Heart left ventricle (tissue), 16 donors: ENCODE measurements at regions of chr18 and their contacts with region 1.

Region 1: GRCh38 chr18:22267697-22268096 is 98.3 kb downstream of the GATA6 start:
- DNase-seq: peak; percentile 78 to 95 (median 86)
- ATAC-seq: peak; percentile 92 to 96 (median 92)
- H3K4me3 ChIP-seq: peak overlapping the region in 9 of 12 donors; percentile 34 to 61 (median 50)
- H3K27ac ChIP-seq: peak overlapping the region; percentile 77 to 99 (median 92)
- H3K4me1 ChIP-seq: peaks cover 0 to 33% (median 7%) of the 10 kb centered on the region in 12 donors
- H3K27me3 ChIP-seq: no peaks in the 10 kb centered on the region
- CTCF ChIP-seq: no peak
- POLR2A ChIP-seq: peak in 1 of 2 donors; percentile 31

Region 2: GRCh38 chr18:22185273-22185672 is 82.4 kb before region 1 on chr18:
- intact Hi-C with region 1: loop called in 5 of 10 experiments (anchors 5 kb)
- DNase-seq: peak in 2 of 5 donors; percentile 44 to 70
- ATAC-seq: peak; percentile 35 to 71 (median 50)
- H3K4me3 ChIP-seq: peak overlapping the region in 2 of 12 donors; percentile 1 to 12
- H3K27ac ChIP-seq: peak overlapping the region; percentile 65 to 100 (median 83)
- H3K4me1 ChIP-seq: peaks cover 0 to 100% (median 69%) of the 10 kb centered on the region in 12 donors
- H3K27me3 ChIP-seq: no peaks in the 10 kb centered on the region
- CTCF ChIP-seq: peak in 8 of 12 donors; percentile 13 to 52 (median 34)
- POLR2A ChIP-seq: no peak

Region 3: GRCh38 chr18:22214731-22215528 is 52.8 kb before region 1 on chr18:
- intact Hi-C with region 1: loop called in 3 of 10 experiments (anchors 5 to 10 kb)
- DNase-seq: no peak
- ATAC-seq: peak in 3 of 4 donors; percentile 25 to 36 (median 29)
- H3K4me3 ChIP-seq: no peak overlapping the region
- H3K27ac ChIP-seq: peak overlapping the region in 4 of 12 donors; percentile 23 to 42 (median 30)
- H3K4me1 ChIP-seq: peaks cover 0 to 56% (median 27%) of the 10 kb centered on the region in 12 donors
- H3K27me3 ChIP-seq: no peaks in the 10 kb centered on the region
- CTCF ChIP-seq: no peak
- POLR2A ChIP-seq: no peak

Region 4: GRCh38 chr18:22363867-22364463 is 96.3 kb after region 1 on chr18:
- intact Hi-C with region 1: loop called in 2 of 10 experiments (anchors 5 kb)
- DNase-seq: no peak
- ATAC-seq: peak; percentile 47 to 80 (median 73)
- H3K4me3 ChIP-seq: no peak overlapping the region
- H3K27ac ChIP-seq: no peak overlapping the region
- H3K4me1 ChIP-seq: peaks cover 0 to 9% (median 0%) of the 10 kb centered on the region in 12 donors
- H3K27me3 ChIP-seq: no peaks in the 10 kb centered on the region
- CTCF ChIP-seq: peak in 11 of 12 donors; percentile 12 to 59 (median 47)
- POLR2A ChIP-seq: no peak

Region 5: DNA sequence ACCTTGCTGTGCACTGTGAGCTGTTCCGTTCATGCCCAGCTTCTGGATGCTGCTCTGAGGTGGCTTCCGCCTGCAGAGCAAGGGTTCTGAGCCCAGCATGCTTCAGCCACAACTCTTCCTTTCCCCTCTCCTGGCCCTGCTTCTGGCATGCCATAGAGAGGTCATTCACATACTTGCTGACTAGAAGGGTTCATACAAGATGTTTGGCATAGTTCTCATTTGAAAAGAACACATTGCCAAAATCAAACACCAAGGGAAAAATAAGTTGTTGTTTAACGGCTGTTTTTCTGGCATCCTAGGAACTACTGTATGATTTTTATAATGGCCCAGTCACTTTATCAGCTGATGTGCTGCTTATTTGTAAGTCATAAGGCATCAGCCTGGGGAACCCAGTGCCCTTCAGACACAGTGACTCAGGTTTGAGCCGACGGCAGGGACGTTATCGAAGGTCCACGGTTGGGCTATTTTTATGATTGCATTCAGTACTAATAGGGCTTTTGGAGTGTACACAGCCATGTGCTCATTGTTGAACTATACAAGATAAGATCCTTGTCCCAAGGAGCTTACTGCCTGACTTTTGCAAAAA is 203.9 kb after region 1 on chr18:
- intact Hi-C with region 1: loop called in 2 of 10 experiments (anchors 2 to 5 kb)
- DNase-seq: peak in 4 of 5 donors; percentile 74 to 89 (median 82)
- ATAC-seq: peak; percentile 88 to 95 (median 92)
- H3K4me3 ChIP-seq: no peak overlapping the region
- H3K27ac ChIP-seq: peak overlapping the region; percentile 58 to 97 (median 85)
- H3K4me1 ChIP-seq: peaks cover 0 to 53% (median 42%) of the 10 kb centered on the region in 12 donors
- H3K27me3 ChIP-seq: no peaks in the 10 kb centered on the region
- CTCF ChIP-seq: no peak
- POLR2A ChIP-seq: peak in 1 of 2 donors; percentile 33

Region 6: GRCh38 chr18:22503803-22504202 is 236.1 kb after region 1 on chr18:
- intact Hi-C with region 1: no loop called
- DNase-seq: peak in 4 of 5 donors; percentile 51 to 77 (median 60)
- ATAC-seq: peak; percentile 81 to 95 (median 94)
- H3K4me3 ChIP-seq: no peak overlapping the region
- H3K27ac ChIP-seq: peak overlapping the region in 9 of 12 donors; percentile 29 to 68 (median 50)
- H3K4me1 ChIP-seq: peaks cover 0 to 31% (median 9%) of the 10 kb centered on the region in 12 donors
- H3K27me3 ChIP-seq: no peaks in the 10 kb centered on the region
- CTCF ChIP-seq: no peak
- POLR2A ChIP-seq: no peak